ENCODE measurements at regions of chr10 and their contacts with region 1.

Region 1: GRCh38 chr10:97572214-97572989 is at the start of gene ANKRD2:
- DNase-seq: peak; percentile 87
- H3K4me3 ChIP-seq: peak within 1 kb of the TSS in 1 of 2 experiments; percentile 18; a peak in 1 of 4 replicates
- H3K27ac ChIP-seq: peak within 1 kb of the TSS; percentile 74 to 83
- H3K4me1 ChIP-seq: peaks cover 21 to 35% of the 10 kb centered on the region in 2 experiments; a peak in 3 of 4 replicates
- H3K27me3 ChIP-seq: no peaks in the 10 kb centered on the region
- CTCF ChIP-seq: peak; percentile 85
- EP300 ChIP-seq: no peak
- RAD21 ChIP-seq: peak; percentile 83
- polyA plus RNA-seq, gene ANKRD2: 0.72 and 0.99 TPM in 2 replicates

Region 2: GRCh38 chr10:97553575-97554031 is 18.8 kb before region 1 on chr10:
- CTCF ChIA-PET with region 1: interaction called, 64 read pairs
- POLR2A ChIA-PET with region 1: no interaction called
- DNase-seq: peak; percentile 80
- H3K4me3 ChIP-seq: no peak overlapping the region; a peak in 1 of 4 replicates
- H3K27ac ChIP-seq: no peak overlapping the region
- H3K4me1 ChIP-seq: peaks cover 12 to 23% of the 10 kb centered on the region in 2 experiments; a peak in 3 of 4 replicates
- H3K27me3 ChIP-seq: no peaks in the 10 kb centered on the region
- CTCF ChIP-seq: peak; percentile 91
- EP300 ChIP-seq: no peak
- RAD21 ChIP-seq: peak; percentile 91

Region 3: DNA sequence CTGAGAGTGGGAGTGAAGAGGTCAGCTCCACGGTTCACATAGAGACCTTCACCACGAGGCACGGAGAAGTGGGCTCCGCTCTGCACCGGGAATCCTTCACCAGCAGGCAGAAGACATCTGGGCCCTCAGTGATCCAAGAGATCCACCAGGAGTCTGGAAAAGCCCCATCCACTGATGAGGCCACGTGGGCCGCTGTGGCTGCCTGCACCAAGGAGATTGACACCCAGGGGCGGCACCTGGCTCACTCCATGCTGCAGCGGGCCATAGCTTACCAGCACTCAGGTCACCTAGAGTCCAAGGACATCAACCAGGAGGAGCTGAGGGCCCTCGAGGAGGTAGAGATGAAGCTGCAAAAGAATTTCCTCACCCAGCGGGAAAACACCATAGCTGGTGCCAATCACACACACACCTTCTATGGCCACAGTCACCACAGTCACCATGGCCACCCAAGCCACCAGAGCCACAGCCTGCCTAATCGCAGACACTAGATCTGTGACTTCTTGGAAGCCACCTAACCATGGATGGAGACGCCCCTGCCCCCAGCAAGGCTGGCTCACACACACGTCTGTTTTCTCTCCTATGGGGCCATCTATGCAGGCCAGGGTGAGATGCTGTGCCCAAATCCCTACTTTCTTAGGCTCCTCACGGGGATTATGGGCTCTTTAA is 17.8 kb after region 1 on chr10:
- CTCF ChIA-PET with region 1: interaction called, 60 read pairs
- POLR2A ChIA-PET with region 1: no interaction called
- DNase-seq: peak; percentile 4
- H3K4me3 ChIP-seq: no peak overlapping the region
- H3K27ac ChIP-seq: no peak overlapping the region
- H3K4me1 ChIP-seq: peaks cover 3 to 5% of the 10 kb centered on the region in 2 experiments; a peak in 2 of 4 replicates
- H3K27me3 ChIP-seq: no peaks in the 10 kb centered on the region
- CTCF ChIP-seq: no peak
- EP300 ChIP-seq: no peak
- RAD21 ChIP-seq: no peak

Region 4: GRCh38 chr10:97640174-97640867 is 67.9 kb after region 1 on chr10 and contains the start of gene PI4K2A:
- CTCF ChIA-PET with region 1: interaction called, 11 read pairs
- POLR2A ChIA-PET with region 1: no interaction called
- DNase-seq: peak; percentile 98
- H3K4me3 ChIP-seq: peak within 1 kb of the TSS; percentile 80 to 91
- H3K27ac ChIP-seq: peak within 1 kb of the TSS; percentile 79 to 81
- H3K4me1 ChIP-seq: peaks cover 0 to 2% of the 10 kb centered on the region in 2 experiments; a peak in 1 of 4 replicates
- H3K27me3 ChIP-seq: no peaks in the 10 kb centered on the region
- CTCF ChIP-seq: no peak
- EP300 ChIP-seq: peak in 1 of 2 experiments; percentile 26; a peak in 1 of 4 replicates
- RAD21 ChIP-seq: no peak
- polyA plus RNA-seq, gene PI4K2A: 23.8 and 31.4 TPM in 2 replicates

Region 5: DNA sequence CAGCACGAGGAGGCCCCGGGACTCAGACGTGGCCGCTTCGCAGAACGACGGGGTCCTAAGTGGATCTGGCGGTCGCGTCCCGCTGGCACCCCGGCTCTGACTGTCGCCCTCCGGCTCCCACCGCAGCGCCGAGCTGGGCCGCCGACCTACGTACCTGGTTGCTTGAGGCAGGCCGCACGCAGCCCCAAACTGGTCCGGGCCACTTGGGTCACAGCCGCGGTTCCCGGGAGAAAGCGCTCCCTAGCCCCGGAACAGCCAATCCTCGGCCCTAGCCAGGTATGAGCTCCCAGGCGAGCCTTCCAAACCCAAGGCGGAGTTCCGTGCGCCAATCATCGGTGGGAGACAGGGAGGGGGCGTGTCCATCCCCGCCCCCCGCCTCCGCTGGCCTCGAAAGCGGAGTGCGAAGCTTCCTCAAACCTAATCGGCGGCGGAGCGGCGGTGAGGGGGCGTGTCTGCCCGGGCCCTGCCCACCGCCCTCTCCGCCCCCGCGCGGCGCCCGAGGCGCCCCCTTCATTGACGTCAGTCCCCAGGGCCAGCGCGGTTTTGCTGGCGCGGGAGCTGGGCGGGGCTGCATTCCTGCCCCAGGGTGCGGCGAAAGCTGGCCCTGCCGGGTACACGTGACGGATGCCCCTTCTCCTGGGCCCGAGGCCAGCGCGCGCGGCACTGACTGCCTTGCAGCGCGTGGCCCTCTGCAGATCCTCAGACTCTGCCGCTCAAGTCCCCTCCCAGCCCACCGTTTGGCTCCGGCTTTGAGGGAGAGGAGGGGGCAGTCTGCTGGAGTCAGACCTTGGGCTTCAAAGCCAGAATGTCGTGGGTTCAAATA is 114.8 kb after region 1 on chr10 and contains the start of gene AVPI1:
- CTCF ChIA-PET with region 1: interaction called, 10 read pairs
- POLR2A ChIA-PET with region 1: no interaction called
- DNase-seq: peak; percentile 98
- H3K4me3 ChIP-seq: peak within 1 kb of the TSS; percentile 76 to 82
- H3K27ac ChIP-seq: peak within 1 kb of the TSS; percentile 65 to 70
- H3K4me1 ChIP-seq: peaks cover 28 to 33% of the 10 kb centered on the region in 2 experiments; a peak in 3 of 4 replicates
- H3K27me3 ChIP-seq: no peaks in the 10 kb centered on the region
- CTCF ChIP-seq: no peak
- EP300 ChIP-seq: peak; percentile 41 to 50; a peak in 2 of 4 replicates
- RAD21 ChIP-seq: no peak
- polyA plus RNA-seq, gene AVPI1: 6.3 and 7.0 TPM in 2 replicates

Region 6: DNA sequence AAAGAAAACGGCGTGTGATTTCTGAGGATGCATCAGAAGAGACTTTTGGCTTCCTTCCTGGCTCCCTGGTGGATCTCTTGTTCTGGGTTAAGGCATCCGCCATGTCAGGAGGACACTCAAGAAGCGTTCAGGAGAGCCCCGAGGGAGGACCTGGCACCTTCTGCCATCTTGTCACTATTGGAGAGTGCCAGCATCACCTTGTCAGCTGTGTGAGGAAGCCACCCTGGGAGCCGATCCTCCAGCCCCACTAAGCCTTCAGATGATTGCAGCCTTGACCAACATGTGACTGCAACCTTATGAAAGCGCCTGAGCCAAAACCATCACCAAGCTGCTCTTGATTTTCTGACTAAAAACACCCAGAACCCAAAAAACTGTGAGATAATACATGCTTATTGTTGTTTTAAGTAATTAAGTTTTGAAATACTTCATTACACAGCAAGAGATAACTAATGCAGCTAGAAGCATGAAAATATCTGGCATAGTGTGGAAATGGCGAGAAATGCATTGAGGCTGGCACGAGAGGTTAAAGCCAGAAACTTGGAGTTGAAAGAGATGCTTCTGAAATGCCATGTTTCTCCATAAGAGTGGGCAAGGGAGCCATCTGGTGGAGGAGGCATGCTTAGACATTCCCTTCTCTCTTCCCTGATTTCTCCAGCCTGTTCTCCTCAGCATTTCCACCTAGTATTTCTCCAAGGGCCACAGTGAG is 159.1 kb after region 1 on chr10:
- CTCF ChIA-PET with region 1: interaction called, 10 read pairs
- POLR2A ChIA-PET with region 1: no interaction called
- DNase-seq: peak; percentile 70
- H3K4me3 ChIP-seq: peak overlapping the region in 1 of 2 experiments; percentile 10; a peak in 1 of 4 replicates
- H3K27ac ChIP-seq: no peak overlapping the region
- H3K4me1 ChIP-seq: peaks cover 0 to under 1% of the 10 kb centered on the region in 2 experiments; a peak in 1 of 4 replicates
- H3K27me3 ChIP-seq: no peaks in the 10 kb centered on the region
- CTCF ChIP-seq: peak; percentile 88
- EP300 ChIP-seq: no peak
- RAD21 ChIP-seq: peak; percentile 99

Measured in SK-N-SH (cell line).